CD8-positive, alpha-beta memory T cell (primary cell): ENCODE measurements at regions of chr3 and their contacts with region 1.

Region 1: GRCh38 chr3:157136647-157137387 is 23.1 kb downstream of the CCNL1 start:
- DNase-seq: no peak
- H3K4me3 ChIP-seq: no peak overlapping the region
- H3K4me3 Mint-ChIP-seq: peak overlapping the region in 1 of 7 donors; percentile 55
- H3K27ac ChIP-seq: no peak overlapping the region
- H3K27ac Mint-ChIP-seq: peak overlapping the region in 5 of 8 donors; percentile 1 to 85 (median 74)
- H3K4me1 ChIP-seq: peaks cover 28% of the 10 kb centered on the region
- H3K4me1 Mint-ChIP-seq: peaks cover 38 to 55% (median 54%) of the 10 kb centered on the region in 3 donors
- H3K27me3 ChIP-seq: no peaks in the 10 kb centered on the region
- H3K27me3 Mint-ChIP-seq: no peaks in the 10 kb centered on the region

Region 2: GRCh38 chr3:156547637-156548036 is 589.2 kb before region 1 on chr3:
- CTCF ChIA-PET with region 1: interaction called, 11 read pairs
- POLR2A ChIA-PET with region 1: interaction called, 3 read pairs
- DNase-seq: no peak
- H3K4me3 ChIP-seq: no peak overlapping the region
- H3K4me3 Mint-ChIP-seq: no peak overlapping the region
- H3K27ac ChIP-seq: no peak overlapping the region
- H3K27ac Mint-ChIP-seq: peak overlapping the region in 4 of 8 donors; percentile 1 to 75 (median 42)
- H3K4me1 ChIP-seq: peaks cover 8% of the 10 kb centered on the region
- H3K4me1 Mint-ChIP-seq: peaks cover 47 to 71% (median 70%) of the 10 kb centered on the region in 3 donors
- H3K27me3 ChIP-seq: no peaks in the 10 kb centered on the region
- H3K27me3 Mint-ChIP-seq: no peaks in the 10 kb centered on the region

Region 3: DNA sequence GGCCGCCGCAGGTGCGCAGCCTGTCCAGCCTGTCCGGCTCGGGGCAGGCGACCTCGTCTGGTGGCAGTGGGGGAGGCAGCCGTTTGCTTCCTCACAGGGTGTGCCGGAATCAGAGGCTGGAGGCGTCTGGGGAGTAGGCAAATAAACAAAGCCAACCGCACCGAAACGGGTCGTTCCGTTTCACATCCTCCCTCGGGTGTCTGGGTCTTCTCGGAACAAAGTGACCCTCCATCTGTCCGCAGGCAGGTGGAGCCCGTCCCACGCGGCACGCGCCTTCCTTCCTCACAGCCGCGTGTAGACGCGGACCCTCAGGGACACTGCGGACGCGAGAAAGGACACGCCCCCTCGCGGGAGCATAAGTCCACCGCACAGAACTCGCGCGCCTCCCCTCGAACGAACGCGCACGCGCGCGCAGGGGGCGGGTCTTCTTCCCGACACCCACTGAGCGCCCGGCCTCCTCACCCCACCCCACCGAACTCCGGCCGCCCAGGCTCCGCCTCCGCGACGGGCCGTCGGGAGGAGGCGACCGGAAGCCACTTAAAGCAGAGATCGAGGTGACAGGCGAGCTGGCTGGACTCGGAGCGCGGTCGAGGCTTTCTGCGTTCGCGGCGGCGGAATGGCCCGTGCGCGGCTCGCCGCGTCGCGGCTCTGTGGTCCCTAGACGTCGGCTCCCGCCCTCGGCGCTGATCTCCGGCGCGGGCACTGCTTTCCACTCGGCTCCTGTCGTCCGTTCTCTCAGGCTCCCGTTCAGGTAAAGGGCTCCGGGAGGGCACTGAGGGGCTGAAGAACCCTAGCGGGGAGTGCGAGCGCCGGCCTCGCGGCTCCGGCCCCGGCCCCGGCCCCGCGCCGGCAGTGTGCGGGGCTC is 462.5 kb before region 1 on chr3 and contains the start of gene TIPARP:
- CTCF ChIA-PET with region 1: interaction called, 24 read pairs
- POLR2A ChIA-PET with region 1: interaction called, 5 read pairs
- DNase-seq: peak; percentile 99
- H3K4me3 ChIP-seq: peak within 1 kb of the TSS; percentile 93
- H3K4me3 Mint-ChIP-seq: peak within 1 kb of the TSS; percentile 90 to 98 (median 97)
- H3K27ac ChIP-seq: peak within 1 kb of the TSS; percentile 95
- H3K27ac Mint-ChIP-seq: peak within 1 kb of the TSS; percentile 86 to 99 (median 98)
- H3K4me1 ChIP-seq: peaks cover 35% of the 10 kb centered on the region
- H3K4me1 Mint-ChIP-seq: peaks cover 40 to 44% (median 42%) of the 10 kb centered on the region in 3 donors
- H3K27me3 ChIP-seq: no peaks in the 10 kb centered on the region
- H3K27me3 Mint-ChIP-seq: no peaks in the 10 kb centered on the region
- total RNA-seq, gene TIPARP: 36.0 to 37.0 TPM

Region 4: GRCh38 chr3:157088601-157089454 is 48.0 kb before region 1 on chr3:
- CTCF ChIA-PET with region 1: interaction called, 46 read pairs
- POLR2A ChIA-PET with region 1: interaction called, 7 read pairs
- DNase-seq: peak; percentile 88 to 96 (median 93)
- H3K4me3 ChIP-seq: peak overlapping the region; percentile 72
- H3K4me3 Mint-ChIP-seq: peak overlapping the region; percentile 84 to 95 (median 88)
- H3K27ac ChIP-seq: peak overlapping the region; percentile 68
- H3K27ac Mint-ChIP-seq: peak overlapping the region; percentile 97 to 99 (median 98)
- H3K4me1 ChIP-seq: peaks cover 20% of the 10 kb centered on the region
- H3K4me1 Mint-ChIP-seq: peaks cover 27 to 56% (median 49%) of the 10 kb centered on the region in 3 donors
- H3K27me3 ChIP-seq: no peaks in the 10 kb centered on the region
- H3K27me3 Mint-ChIP-seq: no peaks in the 10 kb centered on the region

Region 5: GRCh38 chr3:157148196-157148889 is 11.5 kb after region 1 on chr3:
- CTCF ChIA-PET with region 1: interaction called, 25 read pairs
- POLR2A ChIA-PET with region 1: no interaction called
- DNase-seq: no peak
- H3K4me3 ChIP-seq: no peak overlapping the region
- H3K4me3 Mint-ChIP-seq: no peak overlapping the region
- H3K27ac ChIP-seq: no peak overlapping the region
- H3K27ac Mint-ChIP-seq: peak overlapping the region; percentile 21 to 78 (median 62)
- H3K4me1 ChIP-seq: peaks cover 5% of the 10 kb centered on the region
- H3K4me1 Mint-ChIP-seq: peaks cover 30 to 63% (median 52%) of the 10 kb centered on the region in 3 donors
- H3K27me3 ChIP-seq: no peaks in the 10 kb centered on the region
- H3K27me3 Mint-ChIP-seq: no peaks in the 10 kb centered on the region

Region 6: DNA sequence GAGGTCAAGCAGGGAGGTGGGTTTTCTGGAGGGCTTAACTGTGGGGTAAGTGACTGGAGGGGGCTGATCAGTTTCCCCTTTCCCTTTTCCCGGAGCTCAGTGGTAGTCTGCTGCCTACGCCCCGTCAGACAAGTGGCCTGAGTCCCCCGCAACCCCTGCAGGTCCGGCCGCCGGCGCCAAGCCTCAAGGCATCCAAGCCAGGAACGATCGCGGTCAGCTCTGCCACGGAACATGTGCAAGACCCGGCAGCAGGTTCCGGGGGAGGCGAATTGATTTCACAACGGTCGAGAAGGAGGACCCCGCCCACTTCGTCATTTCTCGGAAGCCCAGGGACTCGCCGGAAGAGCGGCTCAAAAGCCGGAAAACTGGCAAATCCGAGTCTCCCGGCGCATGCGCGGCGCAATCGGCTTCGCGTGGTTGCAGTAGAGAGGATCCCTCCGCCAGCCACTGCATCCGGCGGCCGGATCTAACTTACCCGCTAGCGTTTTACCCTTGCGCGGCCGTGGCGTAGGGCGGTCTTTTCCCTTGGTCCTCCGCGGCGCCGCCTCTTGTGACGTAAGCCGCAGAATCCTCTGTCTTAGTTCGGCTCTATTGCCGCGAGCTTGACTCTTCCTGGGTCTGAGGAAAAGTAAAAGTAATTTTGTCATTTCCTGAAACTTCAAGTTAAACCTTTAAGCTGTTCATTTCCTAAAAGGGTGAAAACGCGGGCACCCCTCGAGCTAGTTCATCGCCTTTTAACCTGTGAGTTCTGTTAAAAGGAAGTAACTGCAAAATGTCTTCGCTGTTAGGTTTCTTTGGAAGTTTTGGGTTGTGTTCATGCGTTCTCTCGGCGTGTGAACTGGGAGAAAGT is 38.1 kb after region 1 on chr3:
- CTCF ChIA-PET with region 1: interaction called, 12 read pairs
- POLR2A ChIA-PET with region 1: interaction called, 3 read pairs
- DNase-seq: peak; percentile 97 to 99 (median 98)
- H3K4me3 ChIP-seq: peak overlapping the region; percentile 87
- H3K4me3 Mint-ChIP-seq: peak overlapping the region; percentile 91 to 96 (median 95)
- H3K27ac ChIP-seq: peak overlapping the region; percentile 98
- H3K27ac Mint-ChIP-seq: peak overlapping the region; percentile 96 to 100 (median 98)
- H3K4me1 ChIP-seq: peaks cover 25% of the 10 kb centered on the region
- H3K4me1 Mint-ChIP-seq: peaks cover 30 to 44% (median 39%) of the 10 kb centered on the region in 3 donors
- H3K27me3 ChIP-seq: no peaks in the 10 kb centered on the region
- H3K27me3 Mint-ChIP-seq: peaks cover 3 to 5% of the 10 kb centered on the region in 2 donors